ENCODE measurements at regions of chr2 and their contacts with region 1.

Region 1: DNA sequence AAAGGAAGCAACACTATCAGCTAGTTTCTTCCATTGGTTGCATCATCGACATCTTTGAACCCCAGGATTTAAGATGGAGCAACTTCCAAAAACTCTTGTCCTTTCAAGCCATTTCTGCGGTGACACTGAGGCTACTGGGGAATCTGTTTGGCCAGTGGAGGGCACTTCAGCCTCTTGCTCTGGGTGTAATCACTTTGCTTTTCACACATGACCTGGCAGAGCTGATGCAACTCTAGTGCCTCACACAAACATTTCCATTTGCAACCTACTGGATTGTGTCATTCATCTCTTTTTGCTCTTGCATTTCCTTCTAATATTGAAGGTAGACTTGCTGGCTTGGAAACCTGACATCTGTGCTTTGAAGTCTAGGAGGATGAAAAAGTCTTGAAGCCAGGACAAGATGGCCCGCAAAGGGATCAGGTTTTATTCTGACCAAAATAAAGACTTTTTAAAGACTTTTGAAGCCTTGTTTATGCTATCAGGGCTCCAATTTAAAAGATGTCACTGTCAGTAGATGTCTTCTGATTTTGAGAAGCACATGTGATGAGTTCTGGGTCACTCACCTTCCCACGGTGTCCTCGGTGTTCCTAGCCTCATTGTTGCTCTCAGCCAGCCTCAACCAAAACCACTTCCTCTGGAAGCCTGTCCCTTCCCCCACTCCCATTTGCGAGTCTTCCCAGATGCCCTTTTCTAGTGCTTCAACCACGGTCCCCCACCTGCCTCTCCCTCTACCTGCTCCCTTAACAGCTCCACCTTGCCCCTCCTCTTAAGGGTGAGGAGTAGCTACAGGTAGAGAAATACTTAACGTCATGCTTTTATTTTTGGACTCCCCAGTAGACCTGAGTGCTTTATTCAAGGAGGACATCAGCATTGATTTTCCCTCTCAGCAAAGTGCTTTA is 69.7 kb upstream of the KCNE4 start:
- DNase-seq: no peak

Region 2: GRCh38 chr2:222622910-222623309 is 359.3 kb before region 1 on chr2:
- intact Hi-C with region 1: no loop called
- DNase-seq: no peak

Region 3: GRCh38 chr2:223101340-223102039 is 119.2 kb after region 1 on chr2:
- intact Hi-C with region 1: loop called (anchors 2 kb)
- DNase-seq: no peak

Region 4: DNA sequence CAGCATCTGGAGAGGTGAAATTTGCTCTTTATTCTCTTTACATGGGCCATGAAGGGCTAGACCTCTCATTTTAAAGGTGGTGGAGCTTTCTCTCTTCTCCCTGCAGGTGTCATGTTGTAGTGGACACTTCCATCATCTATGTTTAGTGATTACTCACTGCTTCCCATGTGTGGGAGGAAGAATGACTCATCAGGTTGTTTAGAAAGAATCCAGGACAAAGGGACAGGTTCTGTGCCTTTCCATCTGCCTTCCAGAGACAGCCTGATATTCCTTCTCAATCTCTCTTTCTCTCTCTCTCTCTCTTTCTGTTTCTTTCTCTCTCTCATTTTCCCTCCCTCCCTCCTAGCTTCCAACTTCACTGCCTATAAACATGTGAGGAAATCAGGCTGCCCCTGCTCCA is 581.2 kb after region 1 on chr2:
- intact Hi-C with region 1: no loop called
- DNase-seq: no peak

Measured in cardiac septum (tissue), 1 donor.